ENCODE measurements at regions of chr4 and their contacts with region 1.

Region 1: GRCh38 chr4:52659001-52659721 is at the start of gene USP46:
- DNase-seq: peak; percentile 38 to 55 (median 50)
- H3K4me3 ChIP-seq: peak within 1 kb of the TSS; percentile 57 to 59
- H3K4me3 Mint-ChIP-seq: peak within 1 kb of the TSS; percentile 86 to 94 (median 92)
- H3K27ac ChIP-seq: peak within 1 kb of the TSS; percentile 54
- H3K27ac Mint-ChIP-seq: peak within 1 kb of the TSS; percentile 77 to 94 (median 92)
- H3K4me1 ChIP-seq: peaks cover 24% of the 10 kb centered on the region
- H3K4me1 Mint-ChIP-seq: peaks cover 32 to 53% (median 43%) of the 10 kb centered on the region in 4 donors
- H3K27me3 ChIP-seq: no peaks in the 10 kb centered on the region
- H3K27me3 Mint-ChIP-seq: no peaks in the 10 kb centered on the region
- total RNA-seq, gene USP46: 25.7 to 26.9 TPM

Region 2: GRCh38 chr4:51895813-51896408 is 763.2 kb before region 1 on chr4:
- CTCF ChIA-PET with region 1: no interaction called
- POLR2A ChIA-PET with region 1: no interaction called
- intact Hi-C with region 1: loop called (anchors 10 kb)
- DNase-seq: peak in 4 of 5 donors; percentile 22 to 39 (median 30)
- H3K4me3 ChIP-seq: no peak overlapping the region
- H3K4me3 Mint-ChIP-seq: no peak overlapping the region
- H3K27ac ChIP-seq: no peak overlapping the region
- H3K27ac Mint-ChIP-seq: peak overlapping the region in 1 of 7 donors; percentile 5
- H3K4me1 ChIP-seq: no peaks in the 10 kb centered on the region
- H3K4me1 Mint-ChIP-seq: peaks cover 0 to 4% (median 2%) of the 10 kb centered on the region in 4 donors
- H3K27me3 ChIP-seq: no peaks in the 10 kb centered on the region
- H3K27me3 Mint-ChIP-seq: no peaks in the 10 kb centered on the region

Region 3: GRCh38 chr4:52510939-52511565 is 148.1 kb before region 1 on chr4:
- CTCF ChIA-PET with region 1: no interaction called
- POLR2A ChIA-PET with region 1: no interaction called
- intact Hi-C with region 1: no loop called
- DNase-seq: no peak
- H3K4me3 ChIP-seq: no peak overlapping the region
- H3K4me3 Mint-ChIP-seq: no peak overlapping the region
- H3K27ac ChIP-seq: no peak overlapping the region
- H3K27ac Mint-ChIP-seq: no peak overlapping the region
- H3K4me1 ChIP-seq: no peaks in the 10 kb centered on the region
- H3K4me1 Mint-ChIP-seq: no peaks in the 10 kb centered on the region
- H3K27me3 ChIP-seq: no peaks in the 10 kb centered on the region
- H3K27me3 Mint-ChIP-seq: peaks cover 7 to 8% of the 10 kb centered on the region in 2 donors

Region 4: DNA sequence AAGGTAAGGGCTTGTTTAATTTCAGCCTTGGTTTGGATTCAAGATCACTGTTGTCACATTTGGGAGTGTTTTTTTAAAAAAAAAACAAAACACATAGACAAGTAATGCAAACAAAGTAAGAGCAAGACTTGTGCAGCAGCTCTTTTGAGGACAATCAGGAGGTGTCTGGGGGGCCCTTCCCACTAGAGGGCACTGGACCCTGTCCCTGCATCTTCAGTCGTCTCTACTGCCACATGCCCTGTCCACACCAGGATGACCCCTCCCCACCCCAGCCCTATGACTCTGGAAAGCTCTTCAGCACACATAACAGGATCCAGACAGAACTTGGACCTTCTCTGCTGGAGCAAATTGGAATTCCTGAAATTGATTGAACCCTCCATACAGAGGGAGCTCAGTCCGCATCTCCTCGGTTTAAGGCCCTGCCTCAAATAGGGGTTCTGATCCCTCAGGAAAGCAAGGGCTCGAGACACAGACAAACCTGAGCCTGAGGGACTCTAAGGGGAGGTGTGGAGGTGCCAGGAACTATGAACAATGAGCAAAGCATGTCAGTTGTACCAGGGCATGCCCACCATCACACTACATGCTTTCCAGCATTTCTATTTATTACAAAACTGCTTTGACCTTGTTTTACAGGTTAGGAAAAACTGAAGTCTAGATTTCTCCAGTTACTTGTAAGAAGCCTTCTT is 70.9 kb before region 1 on chr4:
- CTCF ChIA-PET with region 1: interaction called, 22 read pairs
- POLR2A ChIA-PET with region 1: interaction called, 19 read pairs
- intact Hi-C with region 1: loop called (anchors 1 kb)
- DNase-seq: peak in 3 of 5 donors; percentile 6 to 32 (median 12)
- H3K4me3 ChIP-seq: no peak overlapping the region
- H3K4me3 Mint-ChIP-seq: peak overlapping the region in 6 of 8 donors; percentile 5 to 72 (median 48)
- H3K27ac ChIP-seq: no peak overlapping the region
- H3K27ac Mint-ChIP-seq: peak overlapping the region; percentile 80 to 95 (median 85)
- H3K4me1 ChIP-seq: peaks cover 30% of the 10 kb centered on the region
- H3K4me1 Mint-ChIP-seq: peaks cover 28 to 40% (median 35%) of the 10 kb centered on the region in 4 donors
- H3K27me3 ChIP-seq: no peaks in the 10 kb centered on the region
- H3K27me3 Mint-ChIP-seq: peaks cover 0 to 2% of the 10 kb centered on the region in 2 donors

Region 5: DNA sequence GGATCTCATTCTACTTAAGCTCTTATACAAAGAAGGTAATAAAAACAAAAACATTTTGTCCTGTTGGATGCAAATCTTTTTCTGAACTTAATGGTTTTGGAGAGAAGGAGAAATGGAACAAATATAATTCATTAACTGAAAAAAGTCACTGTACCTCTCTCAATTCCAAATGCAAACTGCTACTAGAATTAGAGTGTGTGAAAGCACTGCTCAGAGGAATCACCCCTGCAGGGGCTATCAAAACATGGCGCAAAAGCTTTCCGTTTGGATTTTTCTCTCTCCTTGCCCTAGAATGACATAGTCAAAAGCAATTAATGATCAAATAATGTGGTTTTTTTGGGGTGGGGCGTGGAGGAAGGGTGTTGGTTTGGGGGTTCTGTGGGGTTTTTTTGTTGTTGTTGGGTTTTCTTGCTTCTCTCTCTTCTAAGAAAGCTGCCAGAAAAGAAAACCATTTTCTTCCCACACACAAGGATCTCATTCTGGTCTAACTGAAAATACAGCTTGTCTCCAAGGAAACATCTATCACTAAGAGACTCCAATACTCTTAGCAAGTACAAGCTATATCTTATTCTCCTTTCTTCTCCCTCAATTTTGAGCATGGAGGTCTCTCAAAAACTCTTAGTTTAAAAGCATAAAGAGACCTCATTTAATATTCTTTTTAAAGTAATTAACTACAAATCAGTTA is 41.7 kb before region 1 on chr4:
- CTCF ChIA-PET with region 1: no interaction called
- POLR2A ChIA-PET with region 1: interaction called, 4 read pairs
- intact Hi-C with region 1: loop called (anchors 5 kb)
- DNase-seq: peak in 4 of 5 donors; percentile 18 to 54 (median 32)
- H3K4me3 ChIP-seq: no peak overlapping the region
- H3K4me3 Mint-ChIP-seq: peak overlapping the region in 7 of 8 donors; percentile 43 to 76 (median 64)
- H3K27ac ChIP-seq: no peak overlapping the region
- H3K27ac Mint-ChIP-seq: peak overlapping the region; percentile 23 to 89 (median 68)
- H3K4me1 ChIP-seq: peaks cover 50% of the 10 kb centered on the region
- H3K4me1 Mint-ChIP-seq: peaks cover 38 to 54% (median 46%) of the 10 kb centered on the region in 4 donors
- H3K27me3 ChIP-seq: no peaks in the 10 kb centered on the region
- H3K27me3 Mint-ChIP-seq: no peaks in the 10 kb centered on the region

Region 6: DNA sequence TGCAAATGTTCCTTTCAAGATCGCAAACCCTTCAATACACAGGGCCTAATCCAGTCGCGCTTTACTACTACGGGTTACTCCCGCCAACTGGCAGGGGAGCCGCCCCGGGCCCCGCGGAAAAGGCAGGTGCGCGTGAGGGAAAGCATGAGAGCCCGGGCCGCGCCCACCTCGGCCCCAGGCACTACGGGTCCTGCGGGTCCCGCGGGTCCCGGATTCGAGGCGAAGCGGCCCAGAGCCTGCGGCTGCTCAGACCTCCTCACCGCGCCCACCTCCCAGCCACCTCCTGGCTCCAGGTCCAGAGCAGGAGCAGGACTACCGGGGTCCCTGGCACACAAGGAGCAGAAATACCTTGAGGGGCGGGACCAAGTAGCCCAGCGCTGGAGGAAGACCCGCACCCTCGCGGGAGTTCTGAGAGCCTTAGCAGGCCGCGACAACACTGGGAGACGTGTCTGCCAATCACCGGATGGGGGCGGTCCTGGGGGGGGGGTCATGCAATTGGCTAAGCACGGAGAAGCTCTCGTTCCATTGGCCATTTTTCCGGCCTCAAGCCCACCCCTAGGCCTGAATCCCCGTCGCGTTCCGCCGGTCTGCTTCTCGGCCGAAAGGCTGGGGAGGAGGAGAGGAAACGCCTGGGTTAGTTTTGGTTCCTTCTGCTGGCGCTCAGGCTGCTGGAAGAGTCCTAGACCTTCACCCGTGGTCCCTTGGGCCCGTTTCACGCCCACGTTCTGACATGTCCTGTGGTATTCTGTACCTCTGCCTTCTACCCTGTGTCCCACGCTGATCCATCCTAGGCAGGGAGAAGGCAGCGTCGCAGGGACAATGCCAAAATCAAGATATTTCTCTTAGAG is 63.0 kb after region 1 on chr4:
- CTCF ChIA-PET with region 1: no interaction called
- POLR2A ChIA-PET with region 1: interaction called, 24 read pairs
- intact Hi-C with region 1: loop called (anchors 2 kb)
- DNase-seq: peak; percentile 84 to 93 (median 86)
- H3K4me3 ChIP-seq: peak overlapping the region; percentile 84 to 91
- H3K4me3 Mint-ChIP-seq: peak overlapping the region; percentile 64 to 90 (median 87)
- H3K27ac ChIP-seq: peak overlapping the region; percentile 79
- H3K27ac Mint-ChIP-seq: peak overlapping the region; percentile 81 to 94 (median 93)
- H3K4me1 ChIP-seq: peaks cover 9% of the 10 kb centered on the region
- H3K4me1 Mint-ChIP-seq: peaks cover 9 to 12% (median 11%) of the 10 kb centered on the region in 4 donors
- H3K27me3 ChIP-seq: no peaks in the 10 kb centered on the region
- H3K27me3 Mint-ChIP-seq: no peaks in the 10 kb centered on the region

Region 7: GRCh38 chr4:52861879-52862616 is 202.9 kb after region 1 on chr4 and contains the start of gene RASL11B:
- CTCF ChIA-PET with region 1: no interaction called
- POLR2A ChIA-PET with region 1: no interaction called
- intact Hi-C with region 1: loop called (anchors 5 kb)
- DNase-seq: peak; percentile 75 to 87 (median 82)
- H3K4me3 ChIP-seq: peak within 1 kb of the TSS in 1 of 2 donors; percentile 51
- H3K4me3 Mint-ChIP-seq: peak within 1 kb of the TSS; percentile 80 to 86 (median 82)
- H3K27ac ChIP-seq: no peak within 1 kb of the TSS
- H3K27ac Mint-ChIP-seq: peak within 1 kb of the TSS in 3 of 7 donors; percentile 8 to 71 (median 36)
- H3K4me1 ChIP-seq: peaks cover 13% of the 10 kb centered on the region
- H3K4me1 Mint-ChIP-seq: peaks cover 3 to 11% (median 6%) of the 10 kb centered on the region in 4 donors
- H3K27me3 ChIP-seq: peaks cover 7% of the 10 kb centered on the region
- H3K27me3 Mint-ChIP-seq: peaks cover 24 to 33% of the 10 kb centered on the region in 2 donors
- total RNA-seq, gene RASL11B: not detected

Region 8: GRCh38 chr4:54091637-54092404 is 1432.7 kb after region 1 on chr4:
- CTCF ChIA-PET with region 1: no interaction called
- POLR2A ChIA-PET with region 1: no interaction called
- intact Hi-C with region 1: loop called (anchors 10 kb)
- DNase-seq: peak; percentile 80 to 84 (median 83)
- H3K4me3 ChIP-seq: peak overlapping the region; percentile 60 to 68
- H3K4me3 Mint-ChIP-seq: peak overlapping the region; percentile 86 to 95 (median 90)
- H3K27ac ChIP-seq: no peak overlapping the region
- H3K27ac Mint-ChIP-seq: peak overlapping the region; percentile 1 to 84 (median 66)
- H3K4me1 ChIP-seq: peaks cover 29% of the 10 kb centered on the region
- H3K4me1 Mint-ChIP-seq: peaks cover 7 to 41% (median 21%) of the 10 kb centered on the region in 4 donors
- H3K27me3 ChIP-seq: peaks cover 46% of the 10 kb centered on the region
- H3K27me3 Mint-ChIP-seq: peaks cover 44 to 46% of the 10 kb centered on the region in 2 donors

Measured in CD4-positive, alpha-beta memory T cell (primary cell).